ENCODE measurements at regions of chr2 and their contacts with region 1.

Region 1: DNA sequence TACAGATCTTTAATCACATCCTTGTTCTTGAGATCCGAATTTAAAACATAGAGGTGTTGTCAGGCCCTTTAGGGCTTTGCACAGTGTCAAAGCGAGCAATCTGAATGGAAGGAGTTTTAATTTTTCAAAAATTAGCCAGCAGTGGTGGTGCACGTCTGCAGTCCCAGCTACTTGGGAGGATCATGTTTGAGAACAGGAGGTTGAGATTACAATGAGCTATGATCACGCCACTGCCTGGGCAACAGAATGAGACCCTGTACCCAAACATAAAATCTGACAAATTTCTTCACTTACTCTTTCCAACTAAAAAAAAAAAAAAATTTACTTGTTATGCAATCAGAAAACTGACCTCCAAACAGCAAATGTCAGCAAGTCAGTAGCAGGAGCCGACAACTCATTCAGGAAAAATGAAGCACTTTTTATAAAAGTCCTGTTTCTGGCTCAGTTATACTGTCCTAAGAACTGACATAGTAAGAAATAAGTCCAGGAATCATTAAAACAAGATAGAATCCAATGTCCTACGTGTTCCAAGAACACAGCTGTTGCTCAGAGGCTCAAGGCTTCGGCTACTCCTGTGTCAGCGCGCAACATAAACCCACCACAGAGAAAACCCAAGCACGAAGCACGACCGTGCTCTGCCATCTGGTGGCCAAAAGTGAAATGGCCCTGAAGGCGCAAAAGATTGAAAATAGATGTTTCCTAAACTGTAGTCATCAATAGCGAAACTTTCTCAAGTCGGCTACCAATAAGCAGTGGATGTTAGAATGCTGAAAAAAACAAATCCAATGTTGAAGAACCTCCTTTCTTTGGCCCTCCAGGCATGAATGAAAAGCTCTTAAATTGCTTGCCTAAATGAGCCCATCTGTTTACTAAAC is 138.1 kb downstream of the INO80D start:
- DNase-seq: peak; percentile 78
- ATAC-seq: peak; percentile 97
- H3K4me3 ChIP-seq: no peak overlapping the region
- H3K27ac ChIP-seq: no peak overlapping the region
- H3K4me1 ChIP-seq: no peaks in the 10 kb centered on the region; the same call in 1 of the 2 replicates
- H3K27me3 ChIP-seq: peaks cover 5% of the 10 kb centered on the region; the same call in 1 of the 2 replicates
- CTCF ChIP-seq: peak; percentile 95
- POLR2A ChIP-seq: no peak
- RAD21 ChIP-seq: peak; percentile 79

Region 2: DNA sequence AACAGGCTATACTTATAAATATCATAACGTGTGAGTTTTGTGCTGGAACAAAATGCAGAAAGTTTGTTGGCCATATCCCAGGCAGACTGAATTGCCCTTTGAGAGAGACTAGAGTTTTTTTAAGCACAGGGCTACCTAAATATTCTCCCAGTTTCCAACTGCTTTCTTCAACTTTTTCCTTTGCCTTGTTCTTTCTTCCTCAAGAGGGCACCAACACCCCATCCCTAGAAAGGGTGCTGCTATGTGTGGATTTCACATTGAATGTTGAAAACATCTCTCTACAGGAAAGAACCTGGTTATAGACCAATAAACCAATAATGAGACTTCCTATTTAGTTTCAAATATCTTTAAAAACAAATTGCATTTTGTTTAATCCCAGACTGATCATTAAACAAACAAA is 1923.4 kb before region 1 on chr2:
- CTCF ChIA-PET with region 1: no interaction called
- POLR2A ChIA-PET with region 1: no interaction called
- dilution Hi-C with region 1: no loop called
- in situ Hi-C with region 1: no loop called
- intact Hi-C with region 1: loop called (anchors 5 kb)
- DNase-seq: peak; percentile 20
- ATAC-seq: peak; percentile 63
- H3K4me3 ChIP-seq: no peak overlapping the region
- H3K27ac ChIP-seq: no peak overlapping the region
- H3K4me1 ChIP-seq: no peaks in the 10 kb centered on the region
- H3K27me3 ChIP-seq: peaks cover 11% of the 10 kb centered on the region
- CTCF ChIP-seq: peak; percentile 55
- POLR2A ChIP-seq: no peak
- RAD21 ChIP-seq: peak; percentile 54

Region 3: GRCh38 chr2:204145263-204145751 is 1802.6 kb before region 1 on chr2:
- CTCF ChIA-PET with region 1: no interaction called
- POLR2A ChIA-PET with region 1: no interaction called
- dilution Hi-C with region 1: no loop called
- in situ Hi-C with region 1: no loop called
- intact Hi-C with region 1: loop called (anchors 2 kb)
- DNase-seq: peak; percentile 63
- ATAC-seq: peak; percentile 99
- H3K4me3 ChIP-seq: peak overlapping the region; percentile 14; the same call in 1 of the 2 replicates
- H3K27ac ChIP-seq: no peak overlapping the region
- H3K4me1 ChIP-seq: no peaks in the 10 kb centered on the region
- H3K27me3 ChIP-seq: peaks cover 21% of the 10 kb centered on the region
- CTCF ChIP-seq: peak; percentile 86
- POLR2A ChIP-seq: no peak
- RAD21 ChIP-seq: peak; percentile 91